BJ (cell line): ENCODE measurements at regions of chr9 and their contacts with region 1.

Region 1: DNA sequence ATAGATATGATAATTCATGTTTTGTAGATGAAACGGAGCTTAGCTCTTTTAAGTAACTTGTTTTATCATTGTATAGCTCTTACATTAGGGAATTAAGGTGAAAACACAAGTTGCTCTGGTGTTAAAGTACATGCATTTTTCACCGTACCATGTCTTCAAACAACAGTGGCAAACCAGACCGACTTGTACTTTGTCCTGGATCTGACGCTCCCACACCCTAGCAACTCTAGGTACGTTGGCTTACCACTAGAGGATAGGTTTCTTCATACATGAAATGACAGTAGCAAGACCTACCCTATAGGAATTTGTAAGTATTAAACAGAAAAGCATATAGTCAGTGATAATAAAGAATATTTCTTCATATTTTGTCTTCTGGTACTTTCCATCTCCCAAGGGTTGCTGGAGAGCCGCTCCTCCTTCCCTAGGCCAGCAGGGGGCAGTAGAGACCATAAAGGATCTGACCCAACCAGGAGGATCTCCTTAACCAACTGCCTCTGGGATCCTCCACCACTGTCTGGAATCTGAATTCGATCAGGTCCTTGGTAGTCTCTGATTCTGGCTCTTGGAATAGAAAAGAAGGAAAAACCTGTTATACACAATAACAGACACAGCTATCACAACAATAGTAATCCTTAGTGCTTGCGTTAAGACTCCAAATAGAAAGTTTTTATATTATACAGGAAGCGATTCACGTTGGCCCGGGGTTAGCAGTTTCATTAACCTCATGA is 136.7 kb downstream of the CAVIN4 start:
- DNase-seq: no peak
- H3K4me3 ChIP-seq: no peak overlapping the region
- H3K27me3 ChIP-seq: no peaks in the 10 kb centered on the region
- CTCF ChIP-seq: peak; percentile 84

Region 2: DNA sequence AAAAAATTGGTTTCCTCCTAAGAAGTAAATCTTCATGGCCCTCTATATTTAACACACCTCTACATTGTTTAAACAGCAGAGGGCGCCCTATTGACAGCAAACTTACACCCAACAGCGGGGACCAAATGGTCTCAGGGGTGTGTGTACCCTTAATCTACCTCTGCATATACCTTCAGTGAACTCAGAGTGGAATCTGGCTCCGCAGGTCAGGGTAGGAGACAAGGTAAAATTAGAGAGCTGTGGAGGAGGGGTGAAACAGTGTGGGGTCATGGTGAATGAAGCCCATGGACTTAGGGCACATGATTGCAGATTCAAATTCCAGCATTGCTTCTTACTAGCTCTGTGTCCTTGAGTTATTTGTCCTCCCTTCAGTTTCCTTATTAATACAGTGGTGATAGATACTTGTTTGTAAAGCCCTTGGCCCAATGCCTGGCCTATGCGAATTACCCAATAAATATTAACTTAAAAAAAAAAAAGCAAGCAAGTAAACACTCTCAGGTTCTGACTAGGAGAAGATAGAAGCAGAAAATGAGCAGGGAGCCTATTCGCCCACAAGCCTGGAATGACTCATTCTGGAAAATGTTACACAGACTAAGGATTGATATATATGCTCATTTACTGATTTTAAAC is 13.7 kb before region 1 on chr9:
- CTCF ChIA-PET with region 1: interaction called, 10 read pairs
- POLR2A ChIA-PET with region 1: no interaction called
- DNase-seq: no peak
- H3K4me3 ChIP-seq: no peak overlapping the region
- H3K27me3 ChIP-seq: no peaks in the 10 kb centered on the region
- CTCF ChIP-seq: peak; percentile 36

Region 3: DNA sequence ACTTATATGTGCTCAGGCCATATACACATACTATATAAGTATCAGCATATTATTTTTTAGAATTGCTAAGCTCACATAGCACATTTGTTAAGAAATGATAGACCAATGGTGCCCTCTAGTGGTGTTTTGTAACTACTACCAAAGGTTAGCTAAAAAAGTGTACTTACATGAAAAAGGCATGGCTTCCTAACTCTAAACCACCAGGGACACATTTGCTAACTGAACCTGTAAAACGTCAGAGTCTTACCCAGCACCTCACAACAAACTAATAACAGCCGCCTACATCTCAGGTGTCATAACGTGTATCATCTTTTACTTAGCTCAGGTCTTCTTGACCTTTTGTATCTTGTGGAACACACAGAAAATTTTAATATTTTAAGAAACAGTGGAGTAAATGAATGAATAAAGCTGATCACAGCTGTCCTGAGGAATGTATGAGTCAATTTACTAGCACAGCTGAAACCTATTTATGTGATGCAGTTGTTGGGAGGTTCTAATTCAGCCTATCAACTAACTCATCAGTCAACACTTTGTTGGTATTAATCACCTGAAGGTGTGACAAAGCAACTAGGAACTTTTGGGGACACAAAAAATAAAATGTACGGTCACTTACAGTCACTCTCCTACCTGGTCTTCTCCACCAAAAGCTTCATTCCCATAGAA is 597.4 kb after region 1 on chr9:
- CTCF ChIA-PET with region 1: interaction called, 12 read pairs
- POLR2A ChIA-PET with region 1: no interaction called
- DNase-seq: peak; percentile 16
- H3K4me3 ChIP-seq: no peak overlapping the region
- H3K27me3 ChIP-seq: no peaks in the 10 kb centered on the region
- CTCF ChIP-seq: peak; percentile 65